ENCODE measurements at regions of chr9 and their contacts with region 1.

Region 1: DNA sequence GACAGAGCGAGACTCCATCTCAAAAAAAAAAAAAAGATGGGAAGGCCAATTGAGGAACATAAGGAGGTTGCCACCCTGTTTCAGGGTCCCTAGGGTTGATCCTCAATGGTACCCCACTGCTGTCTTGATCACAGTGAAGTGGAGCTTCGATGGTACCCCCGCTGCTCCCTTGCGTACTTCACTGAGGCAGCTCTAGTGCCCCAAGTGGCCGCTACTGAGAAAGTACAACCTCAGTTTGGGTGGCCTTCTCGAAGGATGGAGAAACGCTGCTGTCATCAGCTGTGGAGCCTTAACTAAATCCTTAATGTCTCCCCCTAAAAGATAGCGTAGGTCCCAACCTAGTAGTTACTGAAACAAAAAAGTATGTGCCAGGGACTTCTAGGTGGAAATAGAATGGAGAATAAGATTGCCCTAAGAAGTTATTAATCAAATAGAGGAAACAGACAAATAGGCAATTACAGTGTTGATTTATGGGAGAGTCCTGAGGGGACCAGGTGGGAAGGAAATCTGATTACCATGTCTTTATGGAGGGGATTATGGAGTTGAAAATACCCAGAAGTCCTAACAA is 6.3 kb downstream of the TESK1 start:
- DNase-seq: peak in 6 of 9 donors; percentile 36 to 55 (median 45)
- ATAC-seq: peak; percentile 90
- H3K4me3 ChIP-seq: no peak overlapping the region
- H3K4me3 Mint-ChIP-seq: peak overlapping the region in 1 of 10 donors; percentile 6
- H3K27ac ChIP-seq: no peak overlapping the region
- H3K27ac Mint-ChIP-seq: peak overlapping the region in 3 of 9 donors; percentile 35 to 69 (median 39)
- H3K4me1 ChIP-seq: peaks cover 15 to 17% of the 10 kb centered on the region in 2 donors
- H3K4me1 Mint-ChIP-seq: peaks cover 18 to 32% (median 24%) of the 10 kb centered on the region in 7 donors
- H3K27me3 ChIP-seq: no peaks in the 10 kb centered on the region
- H3K27me3 Mint-ChIP-seq: no peaks in the 10 kb centered on the region

Region 2: DNA sequence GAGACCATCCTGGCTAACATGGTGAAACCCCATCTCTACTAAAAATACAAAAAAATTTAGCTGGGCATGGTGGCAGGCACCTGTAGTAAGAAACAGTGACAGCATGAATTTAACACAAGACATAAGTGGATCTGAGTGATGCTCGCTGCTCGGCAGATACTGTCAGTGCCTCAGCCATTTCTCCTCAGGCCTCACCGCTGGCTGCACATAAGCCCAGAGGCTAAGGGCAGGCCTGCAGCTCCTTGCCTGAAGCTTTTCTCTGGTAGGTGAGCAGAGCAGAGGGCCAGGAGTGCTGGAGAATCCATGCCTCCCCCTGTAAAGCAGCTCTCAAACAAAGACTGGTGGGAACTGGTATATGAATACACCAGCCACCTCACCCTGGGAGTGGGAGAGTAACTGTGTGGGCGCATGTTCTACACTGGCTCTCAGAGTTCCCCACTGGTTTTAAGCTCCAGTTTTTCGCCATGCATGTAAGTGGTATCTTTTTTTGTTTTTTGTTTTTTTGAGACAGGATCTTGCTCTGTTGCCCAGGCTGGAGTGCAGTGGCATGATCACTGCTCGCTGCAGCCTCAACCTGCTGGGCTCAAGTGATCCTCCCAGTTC is 17.2 kb after region 1 on chr9:
- CTCF ChIA-PET with region 1: interaction called, 17 read pairs
- POLR2A ChIA-PET with region 1: interaction called, 11 read pairs
- intact Hi-C with region 1: no loop called
- DNase-seq: no peak
- ATAC-seq: no peak
- H3K4me3 ChIP-seq: no peak overlapping the region
- H3K4me3 Mint-ChIP-seq: no peak overlapping the region
- H3K27ac ChIP-seq: no peak overlapping the region
- H3K27ac Mint-ChIP-seq: no peak overlapping the region
- H3K4me1 ChIP-seq: no peaks in the 10 kb centered on the region
- H3K4me1 Mint-ChIP-seq: peaks cover 2 to 12% (median 6%) of the 10 kb centered on the region in 7 donors
- H3K27me3 ChIP-seq: no peaks in the 10 kb centered on the region
- H3K27me3 Mint-ChIP-seq: no peaks in the 10 kb centered on the region

Measured in naive thymus-derived CD4-positive, alpha-beta T cell (primary cell).